Endothelial cell of umbilical vein (primary cell): ENCODE measurements at regions of chr10 and their contacts with region 1.

Region 1: GRCh38 chr10:112314822-112315474 is 31.7 kb downstream of the TECTB start:
- DNase-seq: peak; percentile 68
- H3K4me3 ChIP-seq: no peak overlapping the region
- H3K27ac ChIP-seq: no peak overlapping the region
- H3K4me1 ChIP-seq: peaks cover 20% of the 10 kb centered on the region
- H3K27me3 ChIP-seq: no peaks in the 10 kb centered on the region
- CTCF ChIP-seq: peak; percentile 81 to 88
- POLR2A ChIP-seq: no peak

Region 2: DNA sequence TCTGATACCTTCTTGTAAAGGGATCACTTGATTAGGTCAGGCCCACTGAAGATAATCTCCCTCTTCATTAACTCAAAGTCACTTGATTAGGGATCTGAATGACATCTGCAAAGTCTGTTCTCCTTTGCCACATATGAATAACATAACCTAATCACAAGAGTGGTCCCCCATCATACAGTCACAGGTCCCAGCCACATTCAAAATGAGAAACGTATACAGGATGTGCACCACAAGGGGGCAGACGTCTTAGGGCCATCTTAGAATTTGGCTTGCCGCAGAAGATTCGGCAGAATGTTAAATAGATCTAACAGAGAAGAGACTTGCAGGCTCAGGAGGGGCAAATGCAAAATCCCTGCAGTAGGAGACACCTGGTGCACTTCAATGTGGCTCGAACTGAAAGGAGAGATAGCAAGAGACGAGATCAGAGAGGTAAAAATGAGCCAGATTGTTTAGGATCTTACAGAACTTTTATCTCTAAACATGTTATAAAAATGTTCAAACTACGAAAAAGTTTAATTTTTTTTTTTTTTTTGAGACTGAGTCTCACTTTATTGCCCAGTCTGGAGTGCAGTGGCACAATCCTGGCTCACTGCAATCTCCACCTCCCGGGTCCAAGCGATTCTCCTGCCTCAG is 1757.9 kb before region 1 on chr10:
- CTCF ChIA-PET with region 1: no interaction called
- POLR2A ChIA-PET with region 1: no interaction called
- dilution Hi-C with region 1: no loop called
- intact Hi-C with region 1: loop called (anchors 5 kb)
- DNase-seq: peak; percentile 44
- H3K4me3 ChIP-seq: no peak overlapping the region
- H3K27ac ChIP-seq: no peak overlapping the region
- H3K4me1 ChIP-seq: no peaks in the 10 kb centered on the region
- H3K27me3 ChIP-seq: peaks cover 2% of the 10 kb centered on the region in 2 experiments
- CTCF ChIP-seq: peak; percentile 38 to 63
- POLR2A ChIP-seq: no peak

Region 3: DNA sequence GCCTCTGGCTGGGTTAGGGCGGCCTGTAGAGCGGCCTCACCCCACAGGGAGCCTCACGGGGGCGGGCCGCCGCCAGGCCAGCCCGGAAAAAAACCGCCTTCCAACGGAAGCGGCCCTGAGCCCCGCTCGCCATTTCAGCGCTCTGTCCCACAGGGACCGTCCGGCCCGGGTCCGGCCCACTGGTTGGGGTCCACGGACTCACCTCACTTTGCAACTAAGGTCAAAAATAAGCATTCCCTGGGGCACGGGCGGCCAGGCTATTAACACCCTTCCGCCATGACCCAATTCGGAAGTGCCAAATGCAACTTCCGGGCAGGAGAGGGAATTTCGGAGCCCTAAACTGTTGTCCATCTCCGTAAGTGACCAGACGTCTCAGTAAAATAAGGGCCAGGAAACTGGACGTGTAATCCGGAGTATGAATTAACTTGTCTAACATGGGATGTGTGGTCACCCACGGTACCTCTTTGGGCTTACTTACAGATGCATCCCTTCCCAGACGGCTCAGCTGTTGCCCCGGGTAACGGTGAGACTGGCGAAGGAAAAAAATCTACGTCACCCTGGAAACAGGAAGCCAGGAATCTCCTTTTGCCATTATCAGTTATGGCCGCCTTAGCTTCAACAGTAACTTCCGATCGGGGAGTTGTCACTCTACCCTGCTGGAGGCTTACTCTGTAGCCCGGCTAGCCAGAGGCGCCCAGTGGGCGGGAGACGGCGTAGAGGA is 1396.1 kb before region 1 on chr10 and contains the start of gene BBIP1:
- CTCF ChIA-PET with region 1: no interaction called
- POLR2A ChIA-PET with region 1: no interaction called
- dilution Hi-C with region 1: no loop called
- intact Hi-C with region 1: loop called (anchors 2 kb)
- DNase-seq: peak; percentile 100
- H3K4me3 ChIP-seq: peak within 1 kb of the TSS; percentile 89 to 94 (median 93)
- H3K27ac ChIP-seq: peak within 1 kb of the TSS; percentile 98
- H3K4me1 ChIP-seq: peaks cover 20% of the 10 kb centered on the region
- H3K27me3 ChIP-seq: no peaks in the 10 kb centered on the region
- CTCF ChIP-seq: no peak
- POLR2A ChIP-seq: peak; percentile 91
- total RNA-seq, gene BBIP1: 32.8 and 34.9 TPM in 2 replicates

Region 4: DNA sequence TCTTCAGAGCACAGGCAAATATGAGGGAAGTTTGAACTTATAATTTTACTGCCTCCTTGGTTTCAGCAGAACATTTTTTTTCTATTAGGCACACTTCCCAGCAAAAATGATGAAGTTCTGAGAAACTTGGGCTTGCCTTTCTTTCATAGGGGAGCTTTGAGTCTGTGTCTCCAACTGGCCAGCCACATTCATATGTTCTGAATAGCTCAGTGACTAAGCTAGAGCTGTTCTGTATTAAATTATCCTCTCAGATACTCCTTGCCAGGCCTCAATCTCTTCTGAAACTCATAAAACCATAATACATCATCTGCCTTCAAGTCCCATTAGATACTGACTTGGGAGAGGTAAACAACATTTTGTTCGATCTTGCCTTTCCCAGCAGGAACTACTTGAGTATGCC is 607.9 kb before region 1 on chr10:
- CTCF ChIA-PET with region 1: no interaction called
- POLR2A ChIA-PET with region 1: no interaction called
- dilution Hi-C with region 1: no loop called
- intact Hi-C with region 1: no loop called
- DNase-seq: no peak
- H3K4me3 ChIP-seq: no peak overlapping the region
- H3K27ac ChIP-seq: no peak overlapping the region
- H3K4me1 ChIP-seq: no peaks in the 10 kb centered on the region
- H3K27me3 ChIP-seq: no peaks in the 10 kb centered on the region
- CTCF ChIP-seq: no peak
- POLR2A ChIP-seq: no peak

Region 5: GRCh38 chr10:112115799-112116385 is 199.1 kb before region 1 on chr10:
- CTCF ChIA-PET with region 1: interaction called, 15 read pairs
- POLR2A ChIA-PET with region 1: no interaction called
- dilution Hi-C with region 1: no loop called
- intact Hi-C with region 1: loop called (anchors 1 kb)
- DNase-seq: peak; percentile 27
- H3K4me3 ChIP-seq: no peak overlapping the region
- H3K27ac ChIP-seq: no peak overlapping the region
- H3K4me1 ChIP-seq: no peaks in the 10 kb centered on the region
- H3K27me3 ChIP-seq: no peaks in the 10 kb centered on the region
- CTCF ChIP-seq: peak; percentile 71 to 90
- POLR2A ChIP-seq: no peak

Region 6: GRCh38 chr10:112361951-112362751 is 47.2 kb after region 1 on chr10:
- CTCF ChIA-PET with region 1: no interaction called
- POLR2A ChIA-PET with region 1: no interaction called
- dilution Hi-C with region 1: no loop called
- intact Hi-C with region 1: loop called (anchors 2 kb)
- DNase-seq: peak; percentile 93
- H3K4me3 ChIP-seq: no peak overlapping the region
- H3K27ac ChIP-seq: peak overlapping the region; percentile 56
- H3K4me1 ChIP-seq: peaks cover 28% of the 10 kb centered on the region
- H3K27me3 ChIP-seq: no peaks in the 10 kb centered on the region
- CTCF ChIP-seq: peak in 1 of 2 donors; percentile 7
- POLR2A ChIP-seq: no peak

Region 7: DNA sequence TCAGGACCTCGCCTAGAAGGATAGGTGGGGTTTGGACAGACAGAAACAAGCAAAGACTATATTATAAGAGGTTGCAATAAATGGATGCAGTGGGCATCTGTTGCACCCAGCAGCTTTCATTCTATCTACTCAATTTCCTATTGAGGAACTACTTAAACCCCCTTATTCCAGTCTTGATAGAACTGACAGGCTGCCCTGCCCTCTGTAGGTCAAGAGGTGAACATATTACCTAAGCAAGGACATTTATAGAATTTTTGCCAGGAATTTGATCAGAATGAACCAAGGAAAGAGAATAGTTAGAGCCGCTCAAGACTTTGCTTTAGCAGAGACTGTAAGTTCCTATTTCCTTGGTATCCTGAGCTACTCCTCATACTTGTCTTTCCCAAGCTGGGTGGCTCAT is 141.6 kb after region 1 on chr10:
- CTCF ChIA-PET with region 1: no interaction called
- POLR2A ChIA-PET with region 1: no interaction called
- dilution Hi-C with region 1: no loop called
- intact Hi-C with region 1: no loop called
- DNase-seq: no peak
- H3K4me3 ChIP-seq: no peak overlapping the region
- H3K27ac ChIP-seq: no peak overlapping the region
- H3K4me1 ChIP-seq: no peaks in the 10 kb centered on the region
- H3K27me3 ChIP-seq: no peaks in the 10 kb centered on the region
- CTCF ChIP-seq: no peak
- POLR2A ChIP-seq: no peak

Region 8: GRCh38 chr10:112471878-112472487 is 157.0 kb after region 1 on chr10:
- CTCF ChIA-PET with region 1: interaction called, 13 read pairs
- POLR2A ChIA-PET with region 1: no interaction called
- dilution Hi-C with region 1: no loop called
- intact Hi-C with region 1: loop called (anchors 1 kb)
- DNase-seq: peak; percentile 66
- H3K4me3 ChIP-seq: no peak overlapping the region
- H3K27ac ChIP-seq: no peak overlapping the region
- H3K4me1 ChIP-seq: no peaks in the 10 kb centered on the region
- H3K27me3 ChIP-seq: no peaks in the 10 kb centered on the region
- CTCF ChIP-seq: peak; percentile 44 to 45
- POLR2A ChIP-seq: no peak